ENCODE measurements at regions of chr5 and their contacts with region 1.

Region 1: DNA sequence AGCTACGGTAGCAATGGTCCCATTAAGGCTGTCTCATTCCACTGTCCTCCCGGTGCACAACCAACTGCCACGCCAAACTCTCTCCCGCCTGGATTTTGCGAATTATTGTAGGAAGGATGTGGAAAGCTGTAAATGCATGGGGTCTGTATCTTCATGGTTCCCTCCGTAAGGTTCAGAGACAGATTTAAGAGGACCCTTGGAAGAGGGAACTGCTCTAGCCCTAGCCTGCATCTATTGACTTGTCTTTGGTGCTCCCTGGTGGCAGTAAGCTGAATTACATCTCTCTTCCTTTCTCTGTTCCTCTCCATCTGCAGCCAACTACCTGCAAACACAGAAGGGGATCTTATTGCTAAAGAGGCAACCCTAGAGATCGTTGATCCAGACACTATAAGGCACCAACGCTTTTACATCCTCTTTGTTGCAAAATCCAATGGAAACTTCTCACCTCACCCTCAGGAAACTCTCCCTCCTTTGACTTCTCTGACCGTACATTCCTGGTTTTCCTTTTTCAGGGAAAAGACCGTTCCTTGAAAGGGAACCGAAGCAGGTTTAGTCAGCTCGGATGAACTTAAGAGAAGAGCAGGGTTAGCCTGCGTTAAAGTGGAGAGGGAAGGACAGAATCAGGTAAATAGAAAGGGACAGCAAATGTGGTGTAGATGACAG is 11.9 kb downstream of the CAPSL start:
- DNase-seq: peak in 1 of 2 donors; percentile 39
- ATAC-seq: peak; percentile 70

Region 2: DNA sequence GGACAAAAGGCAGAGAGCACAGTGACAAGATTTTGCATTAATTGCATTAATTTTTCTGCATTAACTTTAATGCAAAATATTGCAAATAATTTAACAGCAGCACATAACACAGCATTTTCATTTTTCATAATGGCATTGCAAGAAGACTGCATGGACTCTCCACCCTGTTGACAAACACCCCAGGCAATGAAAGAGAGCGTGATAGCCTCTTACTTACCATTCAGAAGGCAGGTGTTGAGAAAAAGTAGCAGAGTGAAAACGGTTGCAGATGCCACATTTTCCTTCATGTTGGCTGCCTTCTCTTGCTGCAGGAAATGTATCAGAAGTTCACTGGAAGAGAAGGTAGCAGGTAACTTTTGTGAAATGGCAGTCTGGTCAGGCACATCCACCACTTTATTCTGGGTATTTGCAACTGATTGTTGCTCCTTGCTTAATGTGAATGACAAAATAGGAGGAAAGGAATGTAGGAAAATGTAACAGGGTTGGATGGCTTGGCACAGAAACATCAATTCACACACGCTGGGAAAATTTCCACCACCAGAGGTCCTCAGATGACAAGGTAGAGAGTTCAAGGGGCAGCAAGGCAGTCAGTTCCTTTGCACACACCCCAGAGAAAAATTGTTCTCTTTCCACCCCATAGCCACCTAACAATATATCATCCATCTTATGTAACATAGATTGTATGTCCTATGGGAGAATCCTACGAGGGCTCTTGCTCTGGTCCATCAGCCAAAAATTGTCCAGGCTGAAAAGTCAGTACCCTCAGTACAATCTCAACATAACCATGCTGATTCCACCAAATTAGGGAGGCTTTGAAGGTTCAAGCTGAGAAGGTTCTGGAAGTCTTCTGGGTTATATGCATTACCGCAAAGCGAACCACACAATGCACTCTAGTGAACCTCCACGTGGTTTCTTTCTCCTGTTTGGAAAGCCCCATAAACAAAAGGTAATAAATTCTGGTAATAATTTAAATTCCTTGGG is 836.9 kb before region 1 on chr5:
- intact Hi-C with region 1: loop called in 1 of 2 experiments (anchors 10 kb)
- DNase-seq: peak; percentile 48 to 75
- ATAC-seq: peak; percentile 68

Region 3: DNA sequence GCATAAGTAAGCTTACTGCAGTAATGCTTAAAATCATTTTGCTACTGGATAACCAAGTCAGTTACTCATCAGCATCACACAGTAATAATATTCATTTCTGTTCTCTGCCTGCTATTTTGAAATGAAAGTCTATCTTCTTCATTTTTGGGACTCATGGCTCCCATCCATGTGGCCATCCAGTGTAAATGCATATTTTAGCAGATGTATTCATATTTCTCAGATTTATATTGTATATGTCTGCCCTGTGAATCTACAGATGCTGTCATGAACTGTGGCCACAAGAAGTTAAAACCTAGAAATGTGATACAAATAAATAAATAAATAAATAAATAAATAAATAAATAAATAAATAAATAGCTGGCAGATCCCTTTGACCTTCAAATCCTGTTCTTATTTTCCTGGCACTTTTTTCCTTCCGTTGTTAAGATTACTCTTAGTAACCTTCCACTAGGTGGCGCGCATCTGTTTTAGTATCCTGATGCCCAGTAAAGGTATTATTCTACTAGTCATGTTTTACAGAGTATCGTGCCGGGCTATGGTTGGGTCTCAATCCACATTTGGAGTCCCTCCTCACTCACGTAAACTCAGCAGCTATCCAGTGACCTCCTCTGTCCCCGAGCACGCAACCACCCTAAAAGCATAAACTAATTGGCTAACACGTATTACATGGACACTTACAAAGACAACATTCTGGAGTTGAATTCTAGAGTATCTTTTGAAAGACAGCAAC is 149.0 kb before region 1 on chr5:
- intact Hi-C with region 1: loop called in 1 of 2 experiments (anchors 5 kb)
- DNase-seq: peak; percentile 49 to 87
- ATAC-seq: peak; percentile 54